Panc1 (cell line): ENCODE measurements at regions of chr17 and their contacts with region 1.

Region 1: DNA sequence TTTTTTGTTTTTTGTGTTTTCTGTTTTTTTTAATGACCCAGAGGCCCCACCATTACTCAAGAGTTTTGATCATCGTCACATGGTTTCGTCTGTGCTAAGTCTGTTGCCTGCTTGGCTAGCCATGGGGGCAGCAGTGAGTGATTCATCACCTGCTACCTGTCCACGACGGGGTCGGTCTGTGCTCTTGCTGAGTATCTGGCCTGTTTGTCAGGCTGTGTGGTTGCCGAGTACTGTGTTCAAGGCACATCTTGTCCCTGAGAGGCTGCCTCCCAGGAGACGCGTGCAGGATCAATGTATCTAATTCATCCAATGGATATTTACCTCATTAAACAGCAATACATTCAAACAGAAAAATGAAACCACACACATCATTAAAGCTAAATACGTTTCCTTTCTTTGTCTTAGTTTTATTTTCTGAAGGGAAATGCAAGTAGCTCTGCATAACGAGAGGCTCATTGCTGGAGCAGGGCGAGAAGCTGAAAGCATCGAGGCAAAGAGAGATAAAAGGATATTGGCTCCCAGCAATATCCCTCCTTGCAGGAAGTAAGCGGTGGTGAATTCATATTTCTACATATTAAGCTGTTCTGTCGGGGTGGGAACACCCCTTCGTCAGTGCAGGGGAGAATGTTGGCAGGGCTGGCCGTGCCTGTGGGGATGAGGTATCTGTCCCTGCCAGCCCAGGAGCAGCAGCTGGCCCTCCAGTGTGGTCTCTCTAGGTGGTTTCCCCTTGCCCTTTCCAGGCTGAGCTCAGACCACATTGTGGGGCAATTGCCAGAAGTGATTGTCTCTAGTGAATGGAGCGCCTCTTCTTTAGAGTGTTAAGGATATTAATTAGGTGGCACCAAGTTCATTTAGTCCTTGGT is 166.2 kb upstream of the ASIC2 start:
- DNase-seq: no peak
- ATAC-seq: no peak
- H3K4me3 ChIP-seq: no peak overlapping the region
- H3K27ac ChIP-seq: no peak overlapping the region
- H3K4me1 ChIP-seq: no peaks in the 10 kb centered on the region
- H3K27me3 ChIP-seq: 0 out of 2 replicates have a peak, but pooled peaks cover 7% of the 10 kb centered on the region
- CTCF ChIP-seq: no peak

Region 2: DNA sequence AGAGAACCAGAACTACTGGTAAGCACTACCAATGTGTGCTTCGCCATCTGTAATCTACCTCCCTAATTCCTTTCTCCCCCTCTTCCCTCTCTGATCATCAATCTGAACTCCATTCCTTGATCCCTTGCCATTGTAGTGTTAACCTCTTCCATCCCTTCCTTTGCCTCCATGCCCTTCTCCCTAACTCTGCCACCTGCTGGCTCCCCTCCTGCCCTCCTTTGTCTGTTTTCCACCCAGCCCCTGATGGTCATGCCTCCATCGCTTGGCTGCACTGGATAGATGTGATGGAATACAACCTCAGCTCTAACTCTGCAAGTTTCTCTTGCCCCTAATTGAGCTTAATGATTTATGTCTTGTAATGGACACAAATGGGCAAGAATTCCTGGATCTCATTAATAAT is 58.1 kb before region 1 on chr17:
- CTCF ChIA-PET with region 1: no interaction called
- POLR2A ChIA-PET with region 1: no interaction called
- in situ Hi-C with region 1: no loop called
- intact Hi-C with region 1: no loop called
- DNase-seq: no peak
- ATAC-seq: no peak
- H3K4me3 ChIP-seq: no peak overlapping the region
- H3K27ac ChIP-seq: no peak overlapping the region
- H3K4me1 ChIP-seq: no peaks in the 10 kb centered on the region
- H3K27me3 ChIP-seq: peaks cover 6% of the 10 kb centered on the region
- CTCF ChIP-seq: no peak; the same call in 1 of the 2 replicates

Region 3: DNA sequence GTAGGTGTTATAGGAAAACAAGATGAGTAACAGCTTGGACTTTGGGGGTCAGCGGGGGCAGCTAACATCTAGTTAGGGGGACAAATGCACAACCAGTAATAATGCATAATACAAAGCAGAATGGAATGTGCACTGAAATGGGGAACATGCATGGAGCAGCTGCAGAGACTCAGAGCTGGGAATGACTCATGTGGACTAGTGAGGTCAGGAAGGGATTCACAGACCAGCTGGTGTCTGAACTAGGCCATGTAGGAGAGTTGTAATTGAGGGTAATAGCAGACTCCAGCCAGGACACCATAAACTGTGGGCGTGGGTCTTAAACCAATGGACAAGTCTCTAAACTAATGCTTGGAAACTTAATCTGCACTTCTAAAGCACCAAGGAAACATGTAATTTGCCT is 10.6 kb after region 1 on chr17:
- CTCF ChIA-PET with region 1: no interaction called
- POLR2A ChIA-PET with region 1: no interaction called
- in situ Hi-C with region 1: no loop called
- intact Hi-C with region 1: no loop called
- DNase-seq: no peak
- ATAC-seq: no peak
- H3K4me3 ChIP-seq: no peak overlapping the region
- H3K27ac ChIP-seq: no peak overlapping the region
- H3K4me1 ChIP-seq: no peaks in the 10 kb centered on the region
- H3K27me3 ChIP-seq: peaks cover 3% of the 10 kb centered on the region; the same call in 1 of the 2 replicates
- CTCF ChIP-seq: no peak

Region 4: GRCh38 chr17:34837876-34838478 is 1378.7 kb after region 1 on chr17:
- CTCF ChIA-PET with region 1: no interaction called
- POLR2A ChIA-PET with region 1: interaction called, 10 read pairs
- in situ Hi-C with region 1: no loop called
- intact Hi-C with region 1: no loop called
- DNase-seq: no peak
- ATAC-seq: no peak
- H3K4me3 ChIP-seq: no peak overlapping the region
- H3K27ac ChIP-seq: no peak overlapping the region
- H3K4me1 ChIP-seq: no peaks in the 10 kb centered on the region
- H3K27me3 ChIP-seq: peaks cover 8% of the 10 kb centered on the region
- CTCF ChIP-seq: no peak